ENCODE measurements at regions of chr15 and their contacts with region 1.

Region 1: GRCh38 chr15:84633311-84634227 is 20.5 kb downstream of the WDR73 start:
- DNase-seq: peak in 1 of 2 experiments; percentile 78
- ATAC-seq: peak; percentile 72 to 77
- H3K4me3 ChIP-seq: peak overlapping the region; percentile 51
- H3K27ac ChIP-seq: peak overlapping the region; percentile 63 to 87
- H3K4me1 ChIP-seq: peaks cover 24% of the 10 kb centered on the region; the same call in 2 of the 3 replicates
- CTCF ChIP-seq: peak; percentile 31; the same call in 2 of the 3 replicates
- EP300 ChIP-seq: no peak
- POLR2A ChIP-seq: peak; percentile 35
- RAD21 ChIP-seq: no peak; a peak in 2 of 5 replicates

Region 2: GRCh38 chr15:84648539-84648938 is 15.0 kb after region 1 on chr15:
- CTCF ChIA-PET with region 1: interaction called, 11 read pairs
- POLR2A ChIA-PET with region 1: interaction called, 10 read pairs
- DNase-seq: no peak
- ATAC-seq: no peak
- H3K4me3 ChIP-seq: no peak overlapping the region
- H3K27ac ChIP-seq: no peak overlapping the region
- H3K4me1 ChIP-seq: peaks cover 25% of the 10 kb centered on the region
- CTCF ChIP-seq: no peak
- EP300 ChIP-seq: no peak
- POLR2A ChIP-seq: no peak
- RAD21 ChIP-seq: no peak

Region 3: DNA sequence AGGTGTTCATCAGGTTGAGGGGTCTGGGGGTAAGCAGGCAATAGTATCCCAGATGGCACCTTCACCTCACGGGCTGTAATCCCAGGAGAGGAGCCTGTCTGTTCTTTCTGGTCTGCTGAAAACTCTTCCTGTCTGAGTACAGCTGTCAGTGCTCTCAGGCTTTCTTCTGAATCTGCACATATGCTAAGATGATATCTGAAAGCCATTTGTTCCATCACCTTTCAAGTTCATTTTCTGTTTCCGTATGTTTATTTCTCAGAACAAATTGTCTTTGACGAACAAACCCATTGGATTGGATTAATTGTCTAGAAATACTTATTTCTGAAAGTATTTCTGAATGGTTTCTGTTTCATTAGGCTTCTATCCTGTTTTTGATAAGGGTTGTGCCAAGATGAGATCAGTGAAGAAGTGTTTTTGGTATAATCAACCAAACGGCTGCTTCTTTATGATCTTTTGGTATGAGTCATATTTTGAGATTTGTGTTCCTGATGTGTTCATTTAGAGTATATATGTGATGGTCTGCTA is 128.1 kb after region 1 on chr15:
- CTCF ChIA-PET with region 1: no interaction called
- POLR2A ChIA-PET with region 1: no interaction called
- DNase-seq: no peak
- ATAC-seq: no peak
- H3K4me3 ChIP-seq: no peak overlapping the region
- H3K27ac ChIP-seq: no peak overlapping the region
- H3K4me1 ChIP-seq: peaks cover 45% of the 10 kb centered on the region
- CTCF ChIP-seq: no peak
- EP300 ChIP-seq: no peak
- POLR2A ChIP-seq: no peak
- RAD21 ChIP-seq: no peak

Region 4: DNA sequence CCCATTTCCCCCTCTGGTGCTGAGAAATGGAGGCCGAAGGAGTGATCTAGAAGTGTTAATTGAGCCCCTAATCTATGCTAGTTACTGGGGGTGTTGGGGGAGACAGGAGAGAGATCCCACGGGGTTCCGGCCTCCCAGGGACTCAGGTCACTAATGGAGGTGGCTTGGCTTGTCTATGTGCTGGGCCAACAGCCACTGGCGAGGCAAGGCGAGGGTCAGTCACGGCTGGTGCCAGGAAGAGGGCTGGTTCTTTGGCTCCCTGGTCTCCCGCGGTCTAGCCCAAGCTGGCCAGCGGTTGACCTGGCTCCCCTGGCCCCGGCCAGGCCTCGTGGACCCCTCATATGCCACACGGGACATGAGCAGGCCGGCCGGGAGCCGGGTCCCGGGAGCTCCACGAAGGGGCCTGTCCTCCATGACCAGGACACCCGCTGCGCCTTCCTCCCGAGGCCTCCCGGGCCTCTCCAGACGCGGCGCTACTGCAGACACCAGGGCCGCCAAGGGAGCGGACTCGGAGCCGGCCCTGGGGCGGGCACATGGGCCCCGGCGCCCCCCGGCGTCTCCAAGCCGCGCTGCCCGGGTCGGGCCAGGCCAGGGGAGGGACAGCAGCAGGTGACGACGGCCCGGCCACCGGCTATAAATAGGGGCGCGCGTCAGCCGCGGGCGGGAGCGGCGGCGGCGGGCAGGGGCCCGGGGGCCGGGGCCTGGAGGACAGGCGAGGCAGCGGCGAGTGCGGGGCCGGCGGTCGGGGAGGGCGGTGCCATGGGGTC is 183.3 kb after region 1 on chr15 and contains the start of gene ALPK3:
- CTCF ChIA-PET with region 1: no interaction called
- POLR2A ChIA-PET with region 1: no interaction called
- DNase-seq: no peak
- ATAC-seq: no peak
- H3K4me3 ChIP-seq: no peak within 1 kb of the TSS
- H3K27ac ChIP-seq: peak within 1 kb of the TSS in 1 of 2 experiments; percentile 46; a peak in 3 of 6 replicates
- H3K4me1 ChIP-seq: peaks cover 19% of the 10 kb centered on the region
- CTCF ChIP-seq: no peak
- EP300 ChIP-seq: no peak
- POLR2A ChIP-seq: no peak
- RAD21 ChIP-seq: no peak
- polyA plus RNA-seq, gene ALPK3: 0.30 and 0.33 TPM in 2 replicates